RWPE1 (cell line): ENCODE measurements at regions of chr4 and their contacts with region 1.

Region 1: DNA sequence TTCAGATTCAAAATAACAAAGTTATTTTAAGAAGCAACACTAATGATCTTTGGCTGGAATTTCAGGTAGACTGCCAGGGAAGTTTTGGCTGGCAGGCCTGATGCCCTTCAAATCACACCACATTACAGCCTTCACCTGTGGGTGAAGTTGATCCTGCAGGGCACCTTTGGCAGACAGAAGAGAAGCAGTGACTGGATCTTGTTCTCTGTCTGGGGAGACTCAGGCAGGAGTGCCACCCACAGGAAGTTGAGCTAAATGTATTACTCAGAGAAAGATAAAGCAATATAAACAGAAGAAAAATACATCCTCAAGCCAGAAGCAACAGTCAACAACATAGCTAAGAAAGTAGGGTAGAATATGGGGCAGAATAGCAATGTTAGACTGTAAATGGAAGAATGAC is 12.8 kb upstream of the CFAP299 start:
- DNase-seq: peak; percentile 59
- H3K27ac ChIP-seq: no peak overlapping the region
- CTCF ChIP-seq: no peak

Region 2: GRCh38 chr4:78971326-78971725 is 1351.4 kb before region 1 on chr4:
- CTCF ChIA-PET with region 1: no interaction called
- POLR2A ChIA-PET with region 1: no interaction called
- DNase-seq: no peak
- H3K27ac ChIP-seq: no peak overlapping the region
- CTCF ChIP-seq: no peak

Region 3: GRCh38 chr4:80221161-80221560 is 101.6 kb before region 1 on chr4:
- CTCF ChIA-PET with region 1: interaction called, 19 read pairs
- POLR2A ChIA-PET with region 1: no interaction called
- DNase-seq: no peak
- H3K27ac ChIP-seq: no peak overlapping the region
- CTCF ChIP-seq: peak; percentile 52; the same call in 1 of the 2 replicates